H1 (cell line): ENCODE measurements at regions of chr16 and their contacts with region 1.

Region 1: GRCh38 chr16:31157136-31157535 is 7.3 kb upstream of the PRSS36 start:
- DNase-seq: no peak
- H3K4me3 ChIP-seq: no peak overlapping the region
- H3K27ac ChIP-seq: no peak overlapping the region
- H3K4me1 ChIP-seq: no peaks in the 10 kb centered on the region
- H3K27me3 ChIP-seq: no peaks in the 10 kb centered on the region
- CTCF ChIP-seq: no peak
- EP300 ChIP-seq: no peak
- POLR2A ChIP-seq: no peak
- RAD21 ChIP-seq: no peak

Region 2: DNA sequence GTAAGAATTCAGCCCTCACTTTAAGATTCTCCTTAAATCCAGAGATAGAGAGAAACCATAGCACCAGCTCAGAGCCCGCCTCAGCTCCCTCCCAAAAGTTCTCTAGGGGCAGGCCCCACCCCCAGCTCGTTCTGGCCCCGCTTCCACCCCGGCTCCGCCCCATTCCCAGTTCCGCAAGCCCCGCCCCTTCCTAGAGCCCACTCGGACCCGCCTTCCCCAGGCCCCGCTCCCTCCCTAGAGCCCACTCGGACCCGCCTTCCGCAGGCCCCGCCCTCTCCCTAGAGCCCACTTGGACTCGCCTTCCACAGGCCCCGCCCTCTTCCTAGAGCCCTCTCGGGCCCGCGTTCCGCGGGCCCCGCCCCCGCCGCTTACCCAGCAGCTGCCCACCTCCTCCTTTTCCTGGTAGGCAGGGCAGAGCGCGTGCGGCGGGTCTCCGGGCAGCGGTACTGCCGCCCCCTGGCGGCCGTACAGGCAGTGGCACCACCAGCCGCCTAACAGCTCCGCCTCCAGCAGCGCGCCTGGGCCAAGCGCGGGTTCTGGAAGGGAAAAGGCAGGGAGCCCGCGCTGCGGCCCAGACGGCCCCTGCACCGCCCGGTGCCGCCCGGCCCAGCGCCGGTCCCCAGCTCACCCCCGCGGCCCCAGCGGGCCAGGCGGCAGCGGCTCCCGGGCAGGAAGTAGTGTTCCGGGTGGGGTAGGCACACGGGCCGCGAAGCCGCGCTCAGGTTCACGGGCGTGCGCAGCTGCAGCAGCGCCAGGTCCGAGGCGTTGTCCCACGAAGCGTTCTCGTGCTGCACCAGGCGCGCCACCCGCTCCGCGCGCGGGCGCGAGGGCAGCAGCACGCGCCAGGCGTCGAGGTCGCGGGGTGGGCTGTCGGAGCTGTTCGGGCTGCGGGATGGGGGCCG is 14.8 kb before region 1 on chr16:
- CTCF ChIA-PET with region 1: interaction called, 56 read pairs
- POLR2A ChIA-PET with region 1: interaction called, 17 read pairs
- DNase-seq: peak; percentile 98 to 99
- H3K4me3 ChIP-seq: peak overlapping the region; percentile 10 to 54 (median 24); a peak in 7 of 8 replicates
- H3K27ac ChIP-seq: peak overlapping the region; percentile 48; the same call in 1 of the 2 replicates
- H3K4me1 ChIP-seq: peaks cover 5 to 26% (median 22%) of the 10 kb centered on the region in 4 experiments
- H3K27me3 ChIP-seq: peaks cover 1 to 19% (median 12%) of the 10 kb centered on the region in 4 experiments
- CTCF ChIP-seq: peak; percentile 82 to 95 (median 87)
- EP300 ChIP-seq: 0 out of 3 replicates have a peak, but pooled peaks of 1 of the 2 experiments have one; percentile 45
- POLR2A ChIP-seq: no peak
- RAD21 ChIP-seq: peak; percentile 77 to 85

Region 3: DNA sequence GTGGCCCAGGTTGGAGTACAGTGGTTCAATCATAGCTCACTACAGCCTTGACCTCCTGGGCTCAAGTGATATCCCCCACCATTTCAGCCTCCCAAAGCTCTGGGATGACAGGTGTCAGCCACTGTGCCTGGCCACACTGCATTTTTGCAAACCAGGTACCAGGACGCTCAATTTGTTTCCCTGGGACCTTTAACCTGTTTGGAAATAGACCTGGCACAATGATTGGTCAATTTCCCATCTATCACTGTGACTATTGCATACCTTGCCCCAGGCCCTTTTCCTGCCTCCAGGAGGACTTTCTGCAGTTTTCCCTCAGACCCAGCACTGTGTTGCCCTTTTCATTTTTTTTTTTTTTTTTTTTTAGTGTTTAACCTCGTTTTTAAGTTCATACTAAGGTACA is 11.7 kb after region 1 on chr16:
- CTCF ChIA-PET with region 1: interaction called, 11 read pairs
- POLR2A ChIA-PET with region 1: interaction called, 4 read pairs
- DNase-seq: no peak
- H3K4me3 ChIP-seq: no peak overlapping the region
- H3K27ac ChIP-seq: no peak overlapping the region
- H3K4me1 ChIP-seq: peaks cover 0 to 3% (median 0%) of the 10 kb centered on the region in 4 experiments; a peak in 1 of 7 replicates
- H3K27me3 ChIP-seq: no peaks in the 10 kb centered on the region; a peak in 1 of 7 replicates
- CTCF ChIP-seq: no peak
- EP300 ChIP-seq: no peak
- POLR2A ChIP-seq: no peak
- RAD21 ChIP-seq: no peak

Region 4: DNA sequence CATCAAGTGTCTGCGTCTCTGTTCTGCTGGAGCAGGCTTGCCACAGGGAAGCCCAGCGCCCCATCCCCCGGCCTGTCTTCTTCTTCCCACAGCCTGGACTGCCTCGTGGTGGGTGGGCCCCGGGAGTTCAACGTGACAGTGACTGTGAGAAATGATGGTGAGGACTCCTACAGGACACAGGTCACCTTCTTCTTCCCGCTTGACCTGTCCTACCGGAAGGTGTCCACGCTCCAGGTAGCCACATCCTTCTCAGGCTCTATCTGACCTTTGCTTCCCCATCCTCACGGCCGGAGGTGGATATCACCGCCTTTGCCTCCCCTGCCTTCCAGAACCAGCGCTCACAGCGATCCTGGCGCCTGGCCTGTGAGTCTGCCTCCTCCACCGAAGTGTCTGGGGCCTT is 168.0 kb after region 1 on chr16:
- CTCF ChIA-PET with region 1: no interaction called
- POLR2A ChIA-PET with region 1: no interaction called
- DNase-seq: no peak
- H3K4me3 ChIP-seq: no peak overlapping the region
- H3K27ac ChIP-seq: no peak overlapping the region
- H3K4me1 ChIP-seq: peaks cover 0 to 15% (median 5%) of the 10 kb centered on the region in 4 experiments; a peak in 5 of 7 replicates
- H3K27me3 ChIP-seq: peaks cover 0 to 10% (median 8%) of the 10 kb centered on the region in 4 experiments; a peak in 5 of 7 replicates
- CTCF ChIP-seq: no peak
- EP300 ChIP-seq: no peak
- POLR2A ChIP-seq: no peak
- RAD21 ChIP-seq: no peak

Region 5: DNA sequence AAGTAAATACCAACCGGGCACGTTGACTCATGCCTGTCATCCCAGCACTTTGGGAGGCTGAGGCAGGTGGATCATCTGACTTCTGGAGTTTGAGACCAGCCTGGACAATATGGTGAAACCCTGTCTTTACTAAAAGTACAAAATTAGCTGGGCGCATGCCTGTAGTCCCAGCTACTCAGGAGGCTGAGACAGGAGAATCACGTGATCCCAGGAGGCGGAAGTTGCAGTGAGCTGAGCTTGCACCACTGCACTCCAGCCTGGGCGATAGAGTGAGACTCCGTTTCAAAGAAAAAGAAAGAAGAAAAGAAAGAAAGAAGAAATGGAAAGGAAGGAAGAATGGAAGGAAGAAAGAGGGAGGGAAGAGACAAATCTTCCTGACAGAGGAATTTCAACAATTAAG is 479.3 kb after region 1 on chr16:
- CTCF ChIA-PET with region 1: no interaction called
- POLR2A ChIA-PET with region 1: no interaction called
- DNase-seq: no peak
- H3K4me3 ChIP-seq: no peak overlapping the region
- H3K27ac ChIP-seq: no peak overlapping the region
- H3K4me1 ChIP-seq: no peaks in the 10 kb centered on the region
- H3K27me3 ChIP-seq: no peaks in the 10 kb centered on the region
- CTCF ChIP-seq: no peak
- EP300 ChIP-seq: no peak
- POLR2A ChIP-seq: no peak
- RAD21 ChIP-seq: no peak